ENCODE measurements at regions of chr7 and their contacts with region 1.

Region 1: GRCh38 chr7:78189762-78190161 is 391.2 kb downstream of the PHTF2 start:
- DNase-seq: no peak
- H3K4me3 ChIP-seq: no peak overlapping the region
- H3K27ac ChIP-seq: no peak overlapping the region
- H3K4me1 ChIP-seq: no peaks in the 10 kb centered on the region
- H3K27me3 ChIP-seq: peaks cover 2% of the 10 kb centered on the region
- CTCF ChIP-seq: no peak

Region 2: DNA sequence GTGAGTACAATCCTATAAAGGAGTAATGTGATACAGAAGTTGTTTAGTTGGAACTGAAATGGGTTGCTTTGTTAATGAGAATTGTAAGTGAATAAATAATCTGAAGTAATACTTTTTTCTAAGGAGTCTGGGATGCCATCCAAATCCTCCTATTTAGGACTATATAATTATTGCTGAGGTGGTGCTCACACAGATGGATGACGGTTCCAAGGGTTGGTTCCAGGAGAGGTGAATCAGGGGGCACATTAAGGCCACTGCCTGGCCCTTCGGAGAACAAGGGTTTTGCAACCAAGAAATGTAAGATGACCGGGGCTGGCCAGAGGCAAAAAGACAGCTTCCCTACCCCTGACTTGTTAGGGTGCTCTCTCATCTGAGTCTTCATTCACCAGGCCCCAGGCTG is 38.5 kb before region 1 on chr7:
- CTCF ChIA-PET with region 1: interaction called, 10 read pairs
- dilution Hi-C with region 1: no loop called
- in situ Hi-C with region 1: no loop called
- intact Hi-C with region 1: no loop called
- DNase-seq: no peak
- H3K4me3 ChIP-seq: no peak overlapping the region
- H3K27ac ChIP-seq: no peak overlapping the region
- H3K4me1 ChIP-seq: no peaks in the 10 kb centered on the region
- H3K27me3 ChIP-seq: no peaks in the 10 kb centered on the region
- CTCF ChIP-seq: no peak